GM12878 (cell line): ENCODE measurements at regions of chr2 and their contacts with region 1.

Region 1: GRCh38 chr2:68467077-68467960 is at the starts of genes APLF and FBXO48:
- DNase-seq: peak; percentile 95
- ATAC-seq: peak; percentile 96
- H3K4me3 ChIP-seq: peak within 1 kb of the TSS; percentile 80
- H3K27ac ChIP-seq: peak within 1 kb of the TSS; percentile 74
- H3K4me1 ChIP-seq: peaks cover 11% of the 10 kb centered on the region; the same call in 1 of the 2 replicates
- H3K27me3 ChIP-seq: no peaks in the 10 kb centered on the region
- CTCF ChIP-seq: no peak
- EP300 ChIP-seq: no peak
- POLR2A ChIP-seq: peak; percentile 77
- RAD21 ChIP-seq: no peak
- polyA plus RNA-seq, gene APLF: 0.66 to 0.69 TPM
- polyA plus RNA-seq, gene FBXO48: 0.90 to 1.1 TPM

Region 2: GRCh38 chr2:68452168-68452900 is 15.0 kb before region 1 on chr2:
- CTCF ChIA-PET with region 1: interaction called, 19 read pairs
- POLR2A ChIA-PET with region 1: interaction called, 10 read pairs
- RAD21 ChIA-PET with region 1: interaction called, 13 read pairs
- SMC1A ChIA-PET with region 1: interaction called, 28 read pairs
- in situ Hi-C with region 1: no loop called
- intact Hi-C with region 1: no loop called
- DNase-seq: no peak
- ATAC-seq: no peak
- H3K4me3 ChIP-seq: no peak overlapping the region
- H3K27ac ChIP-seq: no peak overlapping the region
- H3K4me1 ChIP-seq: no peaks in the 10 kb centered on the region
- H3K27me3 ChIP-seq: no peaks in the 10 kb centered on the region
- CTCF ChIP-seq: no peak
- EP300 ChIP-seq: no peak
- POLR2A ChIP-seq: no peak
- RAD21 ChIP-seq: no peak

Region 3: GRCh38 chr2:68594674-68595492 is 127.6 kb after region 1 on chr2:
- CTCF ChIA-PET with region 1: interaction called, 149 read pairs
- POLR2A ChIA-PET with region 1: interaction called, 5 read pairs
- RAD21 ChIA-PET with region 1: interaction called, 29 read pairs
- SMC1A ChIA-PET with region 1: interaction called, 55 read pairs
- in situ Hi-C with region 1: no loop called
- intact Hi-C with region 1: loop called (anchors 1 kb)
- DNase-seq: peak; percentile 27
- ATAC-seq: peak; percentile 83
- H3K4me3 ChIP-seq: peak overlapping the region; percentile 38; the same call in 1 of the 2 replicates
- H3K27ac ChIP-seq: peak overlapping the region; percentile 31; the same call in 1 of the 2 replicates
- H3K4me1 ChIP-seq: no peaks in the 10 kb centered on the region; the same call in 1 of the 2 replicates
- H3K27me3 ChIP-seq: no peaks in the 10 kb centered on the region
- CTCF ChIP-seq: peak; percentile 62 to 93 (median 85)
- EP300 ChIP-seq: no peak
- POLR2A ChIP-seq: no peak
- RAD21 ChIP-seq: peak; percentile 55

Region 4: GRCh38 chr2:68751397-68752339 is 284.3 kb after region 1 on chr2:
- CTCF ChIA-PET with region 1: interaction called, 20 read pairs
- POLR2A ChIA-PET with region 1: no interaction called
- RAD21 ChIA-PET with region 1: interaction called, 9 read pairs
- SMC1A ChIA-PET with region 1: interaction called, 9 read pairs
- in situ Hi-C with region 1: no loop called
- intact Hi-C with region 1: no loop called
- DNase-seq: no peak
- ATAC-seq: peak; percentile 99
- H3K4me3 ChIP-seq: no peak overlapping the region
- H3K27ac ChIP-seq: no peak overlapping the region
- H3K4me1 ChIP-seq: no peaks in the 10 kb centered on the region
- H3K27me3 ChIP-seq: peaks cover 0 to 1% of the 10 kb centered on the region in 2 experiments; a peak in 2 of 4 replicates
- CTCF ChIP-seq: peak; percentile 90 to 94 (median 92)
- EP300 ChIP-seq: no peak
- POLR2A ChIP-seq: no peak
- RAD21 ChIP-seq: peak; percentile 89

Region 5: DNA sequence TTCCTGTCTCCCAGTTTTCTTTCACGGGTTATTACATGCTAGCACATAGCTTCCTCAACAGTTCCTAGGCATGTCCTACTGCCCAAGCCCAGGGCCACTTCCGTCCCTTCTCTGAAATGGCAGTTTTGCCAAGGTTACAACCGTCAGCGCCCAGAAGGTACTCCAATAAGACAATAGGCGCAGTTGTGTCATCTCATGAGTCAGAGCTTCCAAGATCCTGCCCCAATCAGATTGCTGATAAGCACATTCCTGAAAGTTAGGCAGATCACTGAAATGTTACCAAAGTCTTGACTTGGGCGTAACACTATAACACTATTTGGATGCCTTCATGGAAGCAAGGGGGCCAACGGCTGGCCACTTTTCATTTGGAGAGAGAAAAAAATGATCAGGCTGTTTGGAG is 451.2 kb after region 1 on chr2:
- CTCF ChIA-PET with region 1: interaction called, 4 read pairs
- POLR2A ChIA-PET with region 1: no interaction called
- RAD21 ChIA-PET with region 1: no interaction called
- SMC1A ChIA-PET with region 1: interaction called, 3 read pairs
- in situ Hi-C with region 1: loop called (anchors 5 kb)
- intact Hi-C with region 1: no loop called
- DNase-seq: no peak
- ATAC-seq: no peak
- H3K4me3 ChIP-seq: no peak overlapping the region
- H3K27ac ChIP-seq: no peak overlapping the region
- H3K4me1 ChIP-seq: no peaks in the 10 kb centered on the region
- H3K27me3 ChIP-seq: peaks cover 0 to 1% of the 10 kb centered on the region in 2 experiments; a peak in 2 of 4 replicates
- CTCF ChIP-seq: no peak
- EP300 ChIP-seq: no peak
- POLR2A ChIP-seq: no peak
- RAD21 ChIP-seq: no peak